ENCODE measurements at regions of chr1 and their contacts with region 1.

Region 1: DNA sequence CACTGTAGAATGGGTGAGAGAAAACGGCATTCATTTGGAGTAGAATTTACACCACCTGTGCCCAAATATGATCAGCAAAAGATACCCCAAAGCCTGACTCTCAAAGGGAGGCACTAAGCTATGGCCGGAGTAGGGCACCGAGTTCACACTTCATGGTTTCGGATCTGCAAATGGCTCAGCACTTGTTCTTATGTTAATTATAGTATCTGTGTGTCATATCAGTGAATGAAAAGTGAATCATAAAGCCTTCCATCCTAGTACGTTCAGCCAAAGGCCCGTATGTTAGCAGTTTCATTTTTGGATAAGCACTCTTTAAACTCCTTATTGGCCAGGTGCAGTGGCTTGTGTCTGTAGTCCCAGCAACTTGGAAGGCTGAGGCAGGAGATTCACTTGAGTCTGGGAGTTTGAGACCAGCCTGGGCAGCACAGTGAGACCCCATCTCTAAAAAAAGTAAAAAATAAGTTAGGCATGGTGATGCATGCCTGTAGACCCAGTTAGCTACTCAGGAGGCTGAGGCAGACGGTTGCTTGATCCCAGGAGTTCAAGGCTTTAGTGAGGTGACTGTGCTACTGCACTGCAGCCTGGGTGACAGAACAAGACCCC is 4.9 kb upstream of the CORT start:
- DNase-seq: no peak

Region 2: GRCh38 chr1:10472220-10473144 is 27.6 kb after region 1 on chr1 and contains the start of gene DFFA:
- intact Hi-C with region 1: loop called in 1 of 2 experiments (anchors 1 kb)
- DNase-seq: peak; percentile 97
- total RNA-seq, gene DFFA: 21.5 to 24.4 TPM